Activated T-helper 2 cell treated with anti-CD3 and anti-CD28 coated beads, Interferon-gamma antibody, Interleukin-2, Interleukin-4, amounts not matched to agents 10 μg/mL and 5 μg/mL and 100 μg/mL, durations not matched to agents 14 hours and 24 hours and 36 hours (primary cell): ENCODE measurements at regions of chr12 and their contacts with region 1.

Region 1: DNA sequence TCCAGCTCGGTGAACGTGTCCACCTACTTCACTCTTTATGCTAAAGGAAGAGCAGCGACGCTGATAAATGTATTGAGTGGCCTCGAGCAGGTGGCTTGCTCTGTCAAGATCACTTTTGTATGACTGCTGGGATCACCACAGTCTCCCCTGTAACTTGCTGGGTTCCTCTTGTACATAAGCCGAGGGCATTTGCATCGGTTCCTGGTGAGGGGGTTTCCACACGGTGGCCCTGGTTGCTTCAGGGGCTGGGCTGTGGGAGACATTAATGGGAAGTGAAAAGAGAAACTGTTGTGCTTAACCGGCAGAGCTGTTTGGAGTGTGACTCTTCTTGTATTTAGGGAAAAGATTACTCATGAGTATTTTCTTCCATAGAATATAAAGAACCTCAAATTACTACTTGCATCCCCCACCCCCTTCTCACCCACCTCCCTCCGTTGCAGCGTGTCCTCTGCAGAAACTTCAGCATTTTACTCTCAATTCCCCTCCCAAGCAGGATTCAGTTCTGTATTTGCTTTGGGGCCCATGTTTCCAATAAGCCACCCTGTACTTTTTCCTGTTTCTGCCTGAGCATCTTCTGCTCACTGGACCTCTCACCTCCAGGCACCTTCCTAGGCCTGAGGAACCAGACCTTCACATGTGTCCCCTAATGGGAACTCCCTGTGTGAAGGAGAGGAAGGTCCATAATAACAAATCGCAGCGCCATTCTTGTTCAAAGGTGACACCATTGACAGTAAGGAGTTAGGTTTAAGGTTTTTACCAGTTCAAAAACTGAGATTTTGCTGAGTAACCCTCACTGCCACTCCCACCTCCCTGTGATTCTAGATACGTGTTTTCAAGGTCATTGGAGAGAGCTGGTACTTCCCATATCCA is 187.0 kb downstream of the ETV6 start:
- DNase-seq: peak; percentile 12
- H3K4me3 Mint-ChIP-seq: no peak overlapping the region
- H3K27ac Mint-ChIP-seq: peak overlapping the region; percentile 87
- H3K4me1 Mint-ChIP-seq: peaks cover 65% of the 10 kb centered on the region
- H3K27me3 Mint-ChIP-seq: no peaks in the 10 kb centered on the region

Region 2: GRCh38 chr12:11648831-11649702 is 187.4 kb before region 1 on chr12 and contains the start of gene ETV6:
- intact Hi-C with region 1: loop called (anchors 1 kb)
- DNase-seq: peak; percentile 73
- H3K4me3 Mint-ChIP-seq: peak within 1 kb of the TSS; percentile 94
- H3K27ac Mint-ChIP-seq: peak within 1 kb of the TSS; percentile 99
- H3K4me1 Mint-ChIP-seq: peaks cover 28% of the 10 kb centered on the region
- H3K27me3 Mint-ChIP-seq: peaks cover 2% of the 10 kb centered on the region
- total RNA-seq, gene ETV6: 68.2 and 69.4 TPM in 2 replicates

Region 3: DNA sequence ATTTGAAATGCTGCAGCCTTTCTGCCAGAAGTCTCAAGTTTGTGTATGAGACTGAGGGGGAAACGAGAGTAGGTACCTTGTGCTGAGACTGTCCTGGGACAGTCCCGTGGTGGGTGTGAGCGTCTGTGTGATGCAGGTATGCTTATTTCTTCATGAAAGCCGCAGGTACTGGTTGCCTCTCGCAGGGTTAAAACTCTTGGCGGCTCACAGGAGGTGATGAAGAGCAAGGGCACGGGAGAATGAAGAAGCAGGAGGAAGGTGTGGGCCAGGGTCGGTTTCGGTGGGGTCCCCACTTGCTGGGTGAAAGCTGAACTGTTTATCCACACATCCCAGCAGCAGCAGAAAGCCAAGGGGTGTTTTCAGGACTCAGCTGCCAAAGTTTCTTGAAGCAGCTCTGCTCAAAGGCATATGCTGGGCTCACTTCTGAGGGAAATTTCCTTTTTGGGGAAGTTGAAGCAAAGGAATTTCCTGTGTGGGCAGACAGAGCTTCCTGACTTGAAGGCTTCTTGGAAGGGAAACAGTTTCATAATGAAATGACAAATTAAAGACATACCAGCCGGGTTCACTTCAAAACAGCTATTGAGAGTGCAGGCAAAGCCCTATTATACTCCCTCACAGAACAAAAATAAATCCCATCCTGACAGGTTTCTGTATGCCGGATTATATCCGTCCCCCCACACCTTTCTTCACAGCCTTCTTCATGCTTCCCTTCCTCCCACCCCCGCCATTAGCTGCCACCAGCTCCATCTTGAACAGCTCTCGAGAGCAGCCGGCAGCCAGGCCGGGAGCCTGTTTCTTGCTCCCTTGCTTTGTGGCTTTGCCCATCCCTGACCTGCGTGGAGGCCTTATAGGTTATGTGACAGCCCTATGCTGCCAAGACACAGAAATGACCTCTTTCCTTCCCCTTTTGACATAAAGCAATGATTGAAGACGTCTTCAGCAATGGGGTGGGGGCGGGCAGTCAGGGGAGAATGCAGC is 70.4 kb before region 1 on chr12:
- intact Hi-C with region 1: loop called (anchors 1 kb)
- DNase-seq: no peak
- H3K4me3 Mint-ChIP-seq: peak overlapping the region; percentile 63
- H3K27ac Mint-ChIP-seq: peak overlapping the region; percentile 87
- H3K4me1 Mint-ChIP-seq: peaks cover 77% of the 10 kb centered on the region
- H3K27me3 Mint-ChIP-seq: no peaks in the 10 kb centered on the region

Region 4: GRCh38 chr12:11778713-11779685 is 57.5 kb before region 1 on chr12:
- intact Hi-C with region 1: loop called (anchors 1 kb)
- DNase-seq: no peak
- H3K4me3 Mint-ChIP-seq: no peak overlapping the region
- H3K27ac Mint-ChIP-seq: peak overlapping the region; percentile 75
- H3K4me1 Mint-ChIP-seq: peaks cover 61% of the 10 kb centered on the region
- H3K27me3 Mint-ChIP-seq: no peaks in the 10 kb centered on the region

Region 5: GRCh38 chr12:11901701-11902524 is 65.4 kb after region 1 on chr12:
- intact Hi-C with region 1: loop called (anchors 1 kb)
- DNase-seq: no peak
- H3K4me3 Mint-ChIP-seq: no peak overlapping the region
- H3K27ac Mint-ChIP-seq: peak overlapping the region; percentile 85
- H3K4me1 Mint-ChIP-seq: peaks cover 59% of the 10 kb centered on the region
- H3K27me3 Mint-ChIP-seq: no peaks in the 10 kb centered on the region

Region 6: GRCh38 chr12:11981121-11981733 is 144.7 kb after region 1 on chr12:
- intact Hi-C with region 1: loop called (anchors 1 kb)
- DNase-seq: peak; percentile 60
- H3K4me3 Mint-ChIP-seq: peak overlapping the region; percentile 33
- H3K27ac Mint-ChIP-seq: peak overlapping the region; percentile 98
- H3K4me1 Mint-ChIP-seq: peaks cover 63% of the 10 kb centered on the region
- H3K27me3 Mint-ChIP-seq: no peaks in the 10 kb centered on the region